ENCODE measurements at regions of chr3 and their contacts with region 1.

Region 1: DNA sequence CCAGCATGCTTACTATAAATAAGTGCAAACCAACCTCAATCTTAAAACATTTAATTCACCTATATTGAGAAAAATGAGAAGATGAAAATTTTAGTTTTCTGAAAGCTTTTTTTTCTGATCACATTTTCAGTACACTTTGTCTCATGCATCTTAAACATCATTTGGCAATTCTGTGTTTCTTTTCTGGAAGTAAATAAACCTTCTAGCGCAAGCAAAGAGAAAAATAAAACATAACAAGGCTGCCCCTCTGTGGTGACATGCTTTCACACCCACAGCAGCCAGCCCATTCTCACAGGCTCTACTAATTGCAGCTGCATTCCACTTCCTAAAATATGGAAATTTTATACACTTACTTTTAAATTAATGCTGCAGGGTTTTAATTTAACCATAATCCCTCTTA is 90.1 kb downstream of the NEK10 start:
- DNase-seq: no peak
- H3K4me3 ChIP-seq: no peak overlapping the region
- H3K27ac ChIP-seq: no peak overlapping the region
- H3K4me1 ChIP-seq: no peaks in the 10 kb centered on the region
- H3K27me3 ChIP-seq: no peaks in the 10 kb centered on the region
- CTCF ChIP-seq: peak; percentile 42 to 51 (median 45)
- EP300 ChIP-seq: no peak
- POLR2A ChIP-seq: no peak
- RAD21 ChIP-seq: peak; percentile 74 to 76

Region 2: GRCh38 chr3:27134165-27134796 is 144.8 kb before region 1 on chr3:
- CTCF ChIA-PET with region 1: interaction called, 35 read pairs
- POLR2A ChIA-PET with region 1: no interaction called
- DNase-seq: peak in 1 of 2 experiments; percentile 72
- H3K4me3 ChIP-seq: no peak overlapping the region
- H3K27ac ChIP-seq: no peak overlapping the region
- H3K4me1 ChIP-seq: no peaks in the 10 kb centered on the region
- H3K27me3 ChIP-seq: no peaks in the 10 kb centered on the region
- CTCF ChIP-seq: peak; percentile 76 to 97 (median 89)
- EP300 ChIP-seq: no peak
- POLR2A ChIP-seq: no peak
- RAD21 ChIP-seq: peak; percentile 96 to 98

Region 3: DNA sequence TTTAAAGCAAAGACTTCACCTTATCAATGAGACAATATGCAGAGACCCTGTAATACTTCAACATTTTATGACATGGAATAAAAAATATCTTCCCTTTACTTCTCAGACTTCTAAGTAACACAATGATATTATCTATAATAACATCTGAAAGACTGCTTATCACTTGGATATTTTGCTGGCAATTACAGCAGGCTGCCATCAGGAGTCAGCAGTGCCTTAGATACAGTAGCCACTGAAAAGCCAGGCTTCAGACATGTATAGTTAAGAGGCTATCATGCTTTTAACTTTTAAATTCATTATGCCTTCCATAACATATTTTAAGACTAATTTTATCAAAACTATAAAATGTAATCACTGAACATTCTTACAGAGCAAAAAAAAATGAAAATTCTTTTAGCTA is 137.5 kb before region 1 on chr3:
- CTCF ChIA-PET with region 1: interaction called, 17 read pairs
- POLR2A ChIA-PET with region 1: no interaction called
- DNase-seq: no peak
- H3K4me3 ChIP-seq: no peak overlapping the region
- H3K27ac ChIP-seq: no peak overlapping the region
- H3K4me1 ChIP-seq: no peaks in the 10 kb centered on the region
- H3K27me3 ChIP-seq: no peaks in the 10 kb centered on the region
- CTCF ChIP-seq: peak in 2 of 3 experiments; percentile 26 to 44; a peak in 2 of 4 replicates
- EP300 ChIP-seq: no peak
- POLR2A ChIP-seq: no peak
- RAD21 ChIP-seq: peak; percentile 48 to 58

Region 4: DNA sequence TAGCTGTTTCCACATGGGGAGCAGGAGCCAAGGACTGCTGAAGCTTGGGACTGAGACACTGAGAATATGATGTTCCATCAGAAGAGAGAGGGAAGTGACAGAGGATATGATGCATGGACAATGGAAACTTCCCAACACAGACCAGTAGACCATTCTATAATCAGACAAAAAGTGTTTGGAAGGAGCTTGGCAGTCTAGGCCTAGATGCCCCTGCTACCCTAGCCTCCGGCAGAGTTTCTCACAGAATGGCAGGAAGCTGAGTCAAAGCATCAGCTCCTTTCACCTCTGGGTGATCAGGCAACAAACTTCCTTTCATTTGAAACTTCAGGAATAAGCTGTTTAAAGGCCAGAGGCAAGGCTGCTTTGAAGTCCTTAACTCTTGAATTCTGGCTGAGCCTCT is 131.9 kb before region 1 on chr3:
- CTCF ChIA-PET with region 1: interaction called, 17 read pairs
- POLR2A ChIA-PET with region 1: no interaction called
- DNase-seq: no peak
- H3K4me3 ChIP-seq: no peak overlapping the region
- H3K27ac ChIP-seq: no peak overlapping the region
- H3K4me1 ChIP-seq: no peaks in the 10 kb centered on the region
- H3K27me3 ChIP-seq: no peaks in the 10 kb centered on the region
- CTCF ChIP-seq: no peak
- EP300 ChIP-seq: no peak
- POLR2A ChIP-seq: no peak
- RAD21 ChIP-seq: no peak

Measured in H1 (cell line).